PC-3 (cell line): ENCODE measurements at regions of chr3 and their contacts with region 1.

Region 1: GRCh38 chr3:193780810-193781472 is 187.9 kb downstream of the OPA1 start:
- DNase-seq: peak; percentile 95
- ATAC-seq: peak; percentile 84
- H3K4me3 ChIP-seq: no peak overlapping the region
- H3K27ac ChIP-seq: peak overlapping the region; percentile 78
- H3K4me1 ChIP-seq: peaks cover 47% of the 10 kb centered on the region
- H3K27me3 ChIP-seq: no peaks in the 10 kb centered on the region
- CTCF ChIP-seq: peak; percentile 97

Region 2: GRCh38 chr3:193665370-193665989 is 115.5 kb before region 1 on chr3:
- CTCF ChIA-PET with region 1: interaction called, 5 read pairs
- POLR2A ChIA-PET with region 1: interaction called, 4 read pairs
- intact Hi-C with region 1: loop called (anchors 5 kb)
- DNase-seq: peak; percentile 63
- ATAC-seq: no peak
- H3K4me3 ChIP-seq: no peak overlapping the region
- H3K27ac ChIP-seq: no peak overlapping the region
- H3K4me1 ChIP-seq: no peaks in the 10 kb centered on the region
- H3K27me3 ChIP-seq: no peaks in the 10 kb centered on the region
- CTCF ChIP-seq: peak; percentile 75

Region 3: DNA sequence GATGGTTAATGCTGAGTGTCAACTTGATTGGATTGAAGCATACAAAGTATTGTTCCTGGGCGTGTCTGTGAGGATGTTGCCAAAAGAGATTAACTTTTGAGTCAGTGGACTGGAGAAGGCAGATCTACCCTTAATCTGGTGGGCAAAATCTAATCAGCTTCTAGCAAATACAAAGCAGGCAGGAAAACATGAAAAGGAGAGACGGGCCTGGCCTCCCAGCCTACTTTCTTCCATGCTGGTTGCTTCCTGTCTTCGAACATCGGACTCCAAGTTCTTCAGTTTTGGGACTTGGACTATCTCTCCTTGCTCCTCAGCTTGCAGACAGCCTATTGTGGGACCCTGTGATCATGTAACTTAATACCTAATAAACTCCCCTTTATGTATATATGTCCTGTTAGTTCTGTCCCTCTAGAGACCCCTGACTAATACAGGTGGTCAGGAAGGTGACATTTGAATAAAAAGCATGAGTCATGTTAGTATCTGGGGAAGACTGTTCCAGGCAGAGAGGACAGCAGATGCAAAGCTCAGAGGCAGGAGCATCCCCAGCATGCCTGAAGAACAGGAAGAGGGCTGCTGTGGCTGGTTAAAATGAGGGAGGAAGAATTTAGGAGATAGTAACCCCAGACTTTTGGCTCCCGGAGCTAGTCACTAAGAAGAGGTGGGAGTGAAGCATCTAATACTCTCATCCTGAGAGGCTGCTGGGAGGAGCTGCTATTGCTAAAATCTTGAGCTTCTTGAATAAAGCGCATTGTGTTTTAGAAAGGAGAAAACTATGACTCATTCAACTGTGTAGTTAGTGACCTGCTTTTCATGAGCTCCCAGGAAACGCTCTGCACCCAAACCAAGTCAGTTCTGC is 147.6 kb after region 1 on chr3:
- CTCF ChIA-PET with region 1: interaction called, 6 read pairs
- POLR2A ChIA-PET with region 1: no interaction called
- intact Hi-C with region 1: loop called (anchors 5 kb)
- DNase-seq: peak; percentile 87
- ATAC-seq: peak; percentile 94
- H3K4me3 ChIP-seq: peak overlapping the region; percentile 6; the same call in 1 of the 2 replicates
- H3K27ac ChIP-seq: peak overlapping the region; percentile 88
- H3K4me1 ChIP-seq: peaks cover 28% of the 10 kb centered on the region
- H3K27me3 ChIP-seq: no peaks in the 10 kb centered on the region
- CTCF ChIP-seq: no peak

Region 4: DNA sequence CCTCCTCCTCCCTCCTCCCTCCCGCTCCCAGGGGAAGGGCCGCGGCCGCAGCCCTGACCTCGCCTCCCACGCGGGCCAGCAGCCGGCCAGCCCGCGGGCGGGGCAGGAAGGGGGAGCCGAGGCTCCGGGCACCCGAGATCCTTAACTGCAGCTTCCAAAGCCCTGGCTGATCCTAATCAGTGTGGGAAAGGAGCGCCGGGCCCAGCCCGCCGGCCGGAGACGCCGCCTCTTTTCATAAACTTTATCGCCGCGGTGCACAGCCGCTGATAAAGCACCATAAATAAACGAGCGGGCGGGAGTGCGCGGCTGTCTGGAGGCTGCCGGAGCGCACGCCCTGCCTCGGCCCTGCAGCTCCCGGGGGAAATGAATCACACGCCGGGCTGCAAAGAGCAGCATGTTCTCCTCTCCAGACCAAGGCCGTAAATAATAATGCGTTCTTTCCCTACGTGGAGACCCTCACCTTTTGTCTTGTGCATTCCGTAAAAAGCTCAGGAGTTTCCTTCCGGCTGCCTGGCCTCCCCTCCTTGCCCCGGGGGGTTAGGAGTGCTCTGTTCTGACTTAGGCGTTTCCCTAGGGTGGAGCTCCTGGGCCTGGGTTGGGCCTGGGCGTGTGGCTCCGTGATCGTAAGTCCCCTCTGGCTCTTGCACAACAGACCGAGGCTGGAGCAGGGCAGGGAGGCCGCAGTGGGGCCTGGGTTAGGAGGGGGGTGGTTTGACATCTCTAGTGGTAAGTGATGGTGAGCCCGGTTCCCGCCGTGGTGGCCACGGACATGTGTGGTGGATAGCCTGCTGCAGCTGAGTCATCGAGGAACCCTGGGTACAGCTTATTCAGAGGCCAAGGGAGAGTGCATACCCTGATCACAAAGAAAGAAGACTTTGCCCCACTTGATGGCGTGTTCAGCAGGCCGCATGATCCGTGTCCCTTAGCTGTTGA is 222.4 kb after region 1 on chr3:
- CTCF ChIA-PET with region 1: no interaction called
- POLR2A ChIA-PET with region 1: interaction called, 4 read pairs
- intact Hi-C with region 1: loop called (anchors 1 kb)
- DNase-seq: peak; percentile 90
- ATAC-seq: peak; percentile 79
- H3K4me3 ChIP-seq: peak overlapping the region; percentile 56
- H3K27ac ChIP-seq: peak overlapping the region; percentile 82
- H3K4me1 ChIP-seq: peaks cover 40% of the 10 kb centered on the region
- H3K27me3 ChIP-seq: no peaks in the 10 kb centered on the region
- CTCF ChIP-seq: no peak

Region 5: GRCh38 chr3:194141415-194142155 is 360.6 kb after region 1 on chr3:
- CTCF ChIA-PET with region 1: interaction called, 14 read pairs
- POLR2A ChIA-PET with region 1: interaction called, 14 read pairs
- intact Hi-C with region 1: loop called (anchors 1 kb)
- DNase-seq: peak; percentile 94
- ATAC-seq: peak; percentile 44
- H3K4me3 ChIP-seq: peak overlapping the region; percentile 53
- H3K27ac ChIP-seq: peak overlapping the region; percentile 87
- H3K4me1 ChIP-seq: peaks cover 45% of the 10 kb centered on the region
- H3K27me3 ChIP-seq: no peaks in the 10 kb centered on the region
- CTCF ChIP-seq: no peak